Activated T-helper 2 cell treated with anti-CD3 and anti-CD28 coated beads, Interferon-gamma antibody, Interleukin-2, Interleukin-4, amounts not matched to agents 10 μg/mL and 5 μg/mL and 100 μg/mL, durations not matched to agents 14 hours and 24 hours and 36 hours (primary cell): ENCODE measurements at regions of chr17 and their contacts with region 1.

Region 1: DNA sequence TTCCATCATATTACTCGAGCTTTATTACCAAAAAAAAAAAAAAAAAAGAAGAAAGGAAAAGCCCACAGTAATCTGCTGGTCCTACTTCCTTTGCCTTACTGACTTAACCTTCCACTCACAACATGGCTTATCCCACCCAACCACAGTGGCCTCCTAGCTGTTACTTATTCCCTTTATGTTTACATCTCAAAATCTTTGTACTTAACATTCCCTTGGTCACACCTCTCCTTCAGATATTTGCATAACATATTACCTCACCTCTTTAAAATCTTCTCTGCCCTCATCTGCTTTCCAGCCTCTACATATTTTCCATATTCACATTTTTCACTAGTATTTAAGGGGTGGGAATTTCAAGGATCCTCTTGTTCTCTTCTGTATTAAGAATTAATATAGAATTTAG is 327.0 kb upstream of the TBX2 start:
- DNase-seq: no peak
- H3K4me3 Mint-ChIP-seq: no peak overlapping the region
- H3K27ac Mint-ChIP-seq: peak overlapping the region; percentile 35
- H3K4me1 Mint-ChIP-seq: peaks cover 19% of the 10 kb centered on the region
- H3K27me3 Mint-ChIP-seq: no peaks in the 10 kb centered on the region

Region 2: DNA sequence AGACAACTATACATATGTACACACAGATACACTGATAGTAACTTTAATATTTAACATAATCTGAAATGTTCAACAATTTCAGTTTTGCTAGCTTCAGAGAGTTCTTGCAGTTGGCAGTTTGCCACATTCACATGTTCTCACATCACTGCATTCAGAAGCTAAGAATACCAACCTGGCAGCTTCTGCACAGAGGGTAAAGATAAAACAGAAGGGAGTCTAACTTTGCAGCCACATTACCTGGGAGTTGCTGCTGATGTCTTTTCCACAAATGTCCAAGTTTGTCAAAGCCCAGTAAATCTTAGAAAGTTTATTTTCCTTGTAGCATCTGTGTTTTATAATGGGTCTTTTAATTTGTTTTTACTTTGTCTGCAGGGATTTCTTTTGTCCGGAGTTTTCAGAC is 63.0 kb before region 1 on chr17:
- intact Hi-C with region 1: loop called (anchors 2 kb)
- DNase-seq: no peak
- H3K4me3 Mint-ChIP-seq: no peak overlapping the region
- H3K27ac Mint-ChIP-seq: no peak overlapping the region
- H3K4me1 Mint-ChIP-seq: peaks cover 7% of the 10 kb centered on the region
- H3K27me3 Mint-ChIP-seq: no peaks in the 10 kb centered on the region

Region 3: DNA sequence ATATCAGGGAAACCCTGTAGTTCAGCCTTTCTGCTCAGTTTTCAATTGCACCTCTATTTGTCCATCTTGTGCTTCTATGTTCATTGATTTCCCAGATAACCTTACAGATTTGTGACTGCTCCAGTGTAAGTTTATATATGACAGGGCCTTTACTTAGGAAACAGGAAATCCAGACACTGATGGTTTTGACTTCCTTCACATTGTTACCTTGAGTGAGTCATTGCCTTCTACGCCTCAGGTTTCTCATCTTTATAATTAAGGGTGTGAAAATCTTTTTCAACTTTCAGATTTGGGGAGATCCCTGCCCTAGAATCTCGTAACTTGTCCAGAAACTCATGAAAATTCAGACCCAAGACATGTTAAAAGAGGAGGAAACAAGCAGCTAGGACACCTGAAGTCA is 15.4 kb before region 1 on chr17:
- intact Hi-C with region 1: no loop called
- DNase-seq: no peak
- H3K4me3 Mint-ChIP-seq: no peak overlapping the region
- H3K27ac Mint-ChIP-seq: no peak overlapping the region
- H3K4me1 Mint-ChIP-seq: peaks cover 11% of the 10 kb centered on the region
- H3K27me3 Mint-ChIP-seq: no peaks in the 10 kb centered on the region

Region 4: GRCh38 chr17:61139219-61139618 is 66.6 kb after region 1 on chr17:
- intact Hi-C with region 1: loop called (anchors 5 kb)
- DNase-seq: peak; percentile 52
- H3K4me3 Mint-ChIP-seq: peak overlapping the region; percentile 52
- H3K27ac Mint-ChIP-seq: peak overlapping the region; percentile 53
- H3K4me1 Mint-ChIP-seq: peaks cover 24% of the 10 kb centered on the region
- H3K27me3 Mint-ChIP-seq: no peaks in the 10 kb centered on the region